Activated CD8-positive, alpha-beta memory T cell treated with anti-CD3 and anti-CD28 coated beads, Interleukin-2, amount 10 ng/mL, durations not matched to agents 7 days and 5 days (primary cell): ENCODE measurements at regions of chr9 and their contacts with region 1.

Region 1: GRCh38 chr9:89549031-89549644 is 51.2 kb upstream of the SEMA4D start:
- DNase-seq: peak; percentile 89
- ATAC-seq: peak; percentile 99
- H3K4me3 Mint-ChIP-seq: no peak overlapping the region
- H3K27ac Mint-ChIP-seq: peak overlapping the region; percentile 47
- H3K4me1 Mint-ChIP-seq: peaks cover 20% of the 10 kb centered on the region
- H3K27me3 Mint-ChIP-seq: peaks cover 19% of the 10 kb centered on the region

Region 2: GRCh38 chr9:88716596-88717290 is 832.4 kb before region 1 on chr9:
- CTCF ChIA-PET with region 1: no interaction called
- DNase-seq: no peak
- ATAC-seq: no peak
- H3K4me3 Mint-ChIP-seq: no peak overlapping the region
- H3K27ac Mint-ChIP-seq: no peak overlapping the region
- H3K4me1 Mint-ChIP-seq: no peaks in the 10 kb centered on the region
- H3K27me3 Mint-ChIP-seq: peaks cover 14% of the 10 kb centered on the region

Region 3: DNA sequence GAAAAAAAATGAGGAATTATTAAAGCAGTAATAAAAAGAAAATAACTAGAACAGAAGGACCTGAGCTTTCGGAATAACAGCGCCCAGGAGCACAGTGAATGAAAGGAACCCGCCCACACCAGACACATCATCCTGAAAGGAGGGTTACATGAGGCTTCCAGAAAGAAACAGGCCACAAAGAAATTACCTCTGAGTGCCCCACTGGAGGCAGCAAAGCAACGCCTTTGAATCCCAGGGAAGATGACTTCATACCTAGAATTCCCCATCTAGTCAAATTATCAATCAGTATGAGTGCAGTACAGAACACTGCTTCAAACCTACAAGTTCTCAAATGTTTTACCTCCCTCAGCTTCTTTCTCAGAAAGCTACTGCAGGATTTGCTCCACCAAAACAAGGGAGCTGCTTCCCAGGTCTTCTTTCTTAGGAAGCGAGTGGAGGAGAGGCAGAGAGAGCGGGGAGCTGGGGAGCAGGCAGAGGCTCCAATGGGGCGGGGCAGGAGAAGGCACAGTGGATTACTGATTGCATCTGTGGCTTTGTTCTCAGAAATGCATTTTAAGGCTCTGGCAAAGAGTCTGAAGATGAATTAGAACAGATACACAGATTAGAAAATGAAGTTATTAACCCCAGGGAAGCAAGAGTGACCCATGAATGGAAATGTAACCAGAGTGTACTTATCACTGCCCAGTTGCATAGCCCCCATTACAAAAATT is 138.3 kb before region 1 on chr9:
- CTCF ChIA-PET with region 1: interaction called, 17 read pairs
- DNase-seq: peak; percentile 70
- ATAC-seq: peak; percentile 57
- H3K4me3 Mint-ChIP-seq: peak overlapping the region; percentile 64
- H3K27ac Mint-ChIP-seq: peak overlapping the region; percentile 94
- H3K4me1 Mint-ChIP-seq: peaks cover 98% of the 10 kb centered on the region
- H3K27me3 Mint-ChIP-seq: no peaks in the 10 kb centered on the region

Region 4: GRCh38 chr9:89442981-89443814 is 105.9 kb before region 1 on chr9:
- CTCF ChIA-PET with region 1: interaction called, 10 read pairs
- DNase-seq: no peak
- ATAC-seq: no peak
- H3K4me3 Mint-ChIP-seq: no peak overlapping the region
- H3K27ac Mint-ChIP-seq: no peak overlapping the region
- H3K4me1 Mint-ChIP-seq: peaks cover 88% of the 10 kb centered on the region
- H3K27me3 Mint-ChIP-seq: no peaks in the 10 kb centered on the region

Region 5: GRCh38 chr9:89466451-89467277 is 82.5 kb before region 1 on chr9:
- CTCF ChIA-PET with region 1: interaction called, 18 read pairs
- DNase-seq: peak; percentile 68
- ATAC-seq: peak; percentile 34
- H3K4me3 Mint-ChIP-seq: peak overlapping the region; percentile 36
- H3K27ac Mint-ChIP-seq: peak overlapping the region; percentile 87
- H3K4me1 Mint-ChIP-seq: peaks cover 98% of the 10 kb centered on the region
- H3K27me3 Mint-ChIP-seq: no peaks in the 10 kb centered on the region

Region 6: GRCh38 chr9:89489548-89490530 is 59.3 kb before region 1 on chr9:
- CTCF ChIA-PET with region 1: interaction called, 37 read pairs
- DNase-seq: no peak
- ATAC-seq: peak; percentile 70
- H3K4me3 Mint-ChIP-seq: peak overlapping the region; percentile 45
- H3K27ac Mint-ChIP-seq: peak overlapping the region; percentile 84
- H3K4me1 Mint-ChIP-seq: peaks cover 96% of the 10 kb centered on the region
- H3K27me3 Mint-ChIP-seq: no peaks in the 10 kb centered on the region

Region 7: DNA sequence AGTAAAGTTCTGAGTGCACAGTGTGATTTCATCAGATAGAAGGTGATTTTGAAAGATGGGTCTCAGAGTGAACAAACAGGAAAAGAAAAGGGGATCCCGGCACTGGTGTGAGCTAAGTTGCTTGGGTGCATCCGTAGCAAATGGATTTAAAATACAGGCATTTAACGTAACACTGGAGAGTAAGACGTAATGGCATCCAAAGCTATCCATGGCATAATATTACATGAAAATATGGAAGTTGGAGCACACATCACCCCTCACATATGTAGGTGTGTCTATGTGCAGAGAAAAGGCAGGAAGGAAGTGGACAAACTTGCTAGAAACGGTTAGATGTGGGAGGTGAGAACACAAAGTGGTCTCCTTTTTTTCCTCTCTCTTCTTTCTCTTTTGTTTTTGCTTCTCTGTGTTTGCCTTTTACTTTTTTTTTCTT is 13.0 kb before region 1 on chr9:
- CTCF ChIA-PET with region 1: interaction called, 37 read pairs
- DNase-seq: peak; percentile 61
- ATAC-seq: peak; percentile 83
- H3K4me3 Mint-ChIP-seq: peak overlapping the region; percentile 21
- H3K27ac Mint-ChIP-seq: peak overlapping the region; percentile 97
- H3K4me1 Mint-ChIP-seq: peaks cover 79% of the 10 kb centered on the region
- H3K27me3 Mint-ChIP-seq: no peaks in the 10 kb centered on the region

Region 8: DNA sequence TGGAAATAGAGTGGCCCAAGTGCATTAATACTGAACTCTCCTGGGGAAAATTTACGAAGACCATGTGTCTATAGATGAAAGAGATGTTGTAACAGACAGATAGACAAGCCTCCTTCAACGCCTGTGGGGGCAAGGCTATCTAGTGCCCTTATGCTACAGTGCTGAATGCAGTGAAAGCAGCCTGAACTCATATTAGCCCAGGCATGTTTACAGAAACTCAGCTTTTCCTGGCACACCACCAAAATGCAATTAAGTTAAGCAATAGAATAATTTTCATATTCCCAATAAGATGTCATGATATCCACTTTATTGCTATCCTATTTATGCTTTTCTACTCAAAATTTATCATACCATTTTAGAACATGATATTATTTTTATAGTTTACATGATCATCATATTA is 816.5 kb after region 1 on chr9:
- CTCF ChIA-PET with region 1: no interaction called
- DNase-seq: no peak
- ATAC-seq: no peak
- H3K4me3 Mint-ChIP-seq: no peak overlapping the region
- H3K27ac Mint-ChIP-seq: no peak overlapping the region
- H3K4me1 Mint-ChIP-seq: no peaks in the 10 kb centered on the region
- H3K27me3 Mint-ChIP-seq: peaks cover 18% of the 10 kb centered on the region